Psoas muscle (tissue), 8 donors: ENCODE measurements at regions of chr22 and their contacts with region 1.

Region 1: GRCh38 chr22:30574997-30575671 is 669 bp upstream of the GAL3ST1 start:
- DNase-seq: peak in 1 of 2 donors; percentile 48
- ATAC-seq: peak; percentile 23 to 33 (median 30)
- H3K4me3 ChIP-seq: peak overlapping the region; percentile 25
- H3K27ac ChIP-seq: no peak overlapping the region
- H3K4me1 ChIP-seq: peaks cover 13% of the 10 kb centered on the region
- H3K27me3 ChIP-seq: no peaks in the 10 kb centered on the region
- CTCF ChIP-seq: no peak

Region 2: DNA sequence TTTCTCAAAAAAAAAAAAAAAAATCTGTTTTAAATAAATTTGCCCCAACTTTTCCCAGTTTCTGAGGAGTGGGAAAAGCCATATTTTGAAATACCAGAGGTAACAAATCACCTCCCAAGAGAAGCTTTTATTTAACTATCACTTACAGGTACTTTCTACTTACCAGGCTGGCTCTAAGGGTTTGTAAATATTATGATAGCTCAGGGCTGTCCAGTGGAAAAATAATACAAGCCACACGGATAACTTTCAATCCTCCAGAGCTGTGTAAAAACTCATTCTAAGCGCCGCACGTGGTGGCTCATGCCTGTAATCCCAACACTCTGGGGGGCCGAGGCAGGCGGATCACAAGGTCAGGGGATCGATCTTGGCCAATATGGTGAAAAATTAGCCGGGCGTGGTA is 64.0 kb before region 1 on chr22:
- intact Hi-C with region 1: loop called in 1 of 2 experiments (anchors 10 kb)
- DNase-seq: no peak
- ATAC-seq: no peak
- H3K4me3 ChIP-seq: no peak overlapping the region
- H3K27ac ChIP-seq: no peak overlapping the region
- H3K4me1 ChIP-seq: no peaks in the 10 kb centered on the region
- H3K27me3 ChIP-seq: peaks cover 0 to 34% (median 2%) of the 10 kb centered on the region in 3 donors
- CTCF ChIP-seq: no peak

Region 3: DNA sequence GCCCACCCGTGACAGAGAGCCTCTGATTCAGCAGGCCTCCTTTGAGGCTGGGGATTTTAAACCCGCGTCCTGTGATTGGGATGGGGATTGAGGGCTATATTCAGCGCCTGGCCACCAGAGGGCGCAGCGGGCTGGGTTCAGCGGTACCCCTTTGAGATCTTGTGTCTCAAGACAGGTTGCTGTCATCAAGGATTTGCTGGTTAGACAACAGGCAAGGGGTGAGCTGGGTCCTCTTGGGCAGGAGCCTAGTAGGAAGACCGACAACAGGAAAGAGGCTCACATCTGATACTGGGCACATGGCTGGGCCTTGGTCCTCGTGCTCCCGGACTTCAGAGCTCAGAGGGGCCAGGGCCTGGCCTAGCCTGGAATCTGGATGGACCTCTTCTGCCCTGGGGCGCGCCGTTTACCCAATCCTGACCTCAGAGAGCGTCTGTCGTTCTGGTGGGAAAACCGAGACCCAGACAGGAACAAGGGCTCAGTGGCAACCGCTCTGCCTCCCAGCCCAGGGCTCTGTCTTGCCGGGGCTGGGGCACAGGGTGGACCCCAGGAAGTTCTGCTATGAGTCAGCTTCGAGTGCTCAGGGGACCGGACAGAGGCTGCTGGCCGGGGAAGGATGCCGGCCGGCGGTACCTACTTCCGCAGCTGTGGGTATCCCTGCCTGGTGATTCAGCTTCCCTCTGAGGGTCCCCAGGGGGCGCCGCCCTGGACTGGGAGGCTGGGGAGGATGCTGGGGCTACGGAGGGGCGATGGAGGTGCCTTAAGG is 59.5 kb after region 1 on chr22:
- intact Hi-C with region 1: no loop called
- DNase-seq: peak; percentile 89 to 95
- ATAC-seq: peak; percentile 74 to 84 (median 78)
- H3K4me3 ChIP-seq: peak overlapping the region; percentile 87
- H3K27ac ChIP-seq: peak overlapping the region; percentile 85
- H3K4me1 ChIP-seq: peaks cover 17% of the 10 kb centered on the region
- H3K27me3 ChIP-seq: no peaks in the 10 kb centered on the region
- CTCF ChIP-seq: peak; percentile 97